ENCODE measurements at regions of chr6 and their contacts with region 1.

Region 1: GRCh38 chr6:9428421-9429172 is 986.3 kb downstream of the TFAP2A start:
- DNase-seq: no peak
- ATAC-seq: no peak
- H3K4me3 ChIP-seq: no peak overlapping the region
- H3K4me3 Mint-ChIP-seq: no peak overlapping the region
- H3K27ac ChIP-seq: no peak overlapping the region
- H3K27ac Mint-ChIP-seq: no peak overlapping the region
- H3K4me1 ChIP-seq: no peaks in the 10 kb centered on the region
- H3K4me1 Mint-ChIP-seq: no peaks in the 10 kb centered on the region
- H3K27me3 ChIP-seq: no peaks in the 10 kb centered on the region
- H3K27me3 Mint-ChIP-seq: no peaks in the 10 kb centered on the region
- CTCF ChIP-seq: no peak

Region 2: DNA sequence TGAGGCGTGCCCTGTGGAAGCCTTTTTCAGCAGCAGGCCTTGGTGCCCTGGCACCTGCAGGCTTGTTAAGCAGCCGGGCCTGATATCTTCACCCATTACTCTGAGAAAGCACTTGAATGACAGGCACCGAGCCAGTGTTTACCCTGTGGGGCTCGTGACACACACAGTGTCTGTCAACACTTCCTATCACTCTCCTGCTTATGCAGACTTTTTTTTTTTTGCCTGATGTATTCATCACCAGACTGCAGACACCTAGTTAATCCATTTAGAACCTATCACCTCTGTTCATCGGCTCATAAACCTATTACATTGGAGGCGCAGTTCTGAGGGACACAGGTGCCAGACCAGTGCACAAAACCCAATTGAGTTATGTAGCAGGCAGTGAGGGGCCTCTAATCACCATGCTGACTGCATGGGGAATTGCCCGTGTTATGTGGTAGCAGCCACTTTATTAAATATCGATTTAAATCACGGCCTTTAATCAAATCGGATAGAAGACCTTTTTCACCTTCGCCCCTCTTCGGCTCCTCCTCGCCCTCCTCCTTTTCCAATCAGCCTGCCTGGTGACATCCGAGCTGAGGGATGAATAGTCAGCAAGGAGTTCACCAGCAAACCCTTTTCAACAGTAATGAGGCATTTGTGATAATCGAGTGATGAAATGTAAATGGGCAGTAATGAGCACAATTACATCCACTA is 30.4 kb before region 1 on chr6:
- CTCF ChIA-PET with region 1: no interaction called
- POLR2A ChIA-PET with region 1: no interaction called
- intact Hi-C with region 1: loop called in 1 of 2 experiments (anchors 1 kb)
- DNase-seq: no peak
- ATAC-seq: no peak
- H3K4me3 ChIP-seq: no peak overlapping the region
- H3K4me3 Mint-ChIP-seq: no peak overlapping the region
- H3K27ac ChIP-seq: no peak overlapping the region
- H3K27ac Mint-ChIP-seq: no peak overlapping the region
- H3K4me1 ChIP-seq: no peaks in the 10 kb centered on the region
- H3K4me1 Mint-ChIP-seq: no peaks in the 10 kb centered on the region
- H3K27me3 ChIP-seq: no peaks in the 10 kb centered on the region
- H3K27me3 Mint-ChIP-seq: peaks cover 32% of the 10 kb centered on the region
- CTCF ChIP-seq: no peak